AG04449 (cell line): ENCODE measurements at regions of chr17 and their contacts with region 1.

Region 1: GRCh38 chr17:38735161-38735997 is 5.2 kb downstream of the CISD3 start:
- DNase-seq: no peak
- H3K4me3 ChIP-seq: no peak overlapping the region
- CTCF ChIP-seq: peak; percentile 88

Region 2: GRCh38 chr17:38685491-38685890 is 49.9 kb before region 1 on chr17:
- CTCF ChIA-PET with region 1: interaction called, 11 read pairs
- POLR2A ChIA-PET with region 1: no interaction called
- DNase-seq: no peak
- H3K4me3 ChIP-seq: no peak overlapping the region
- CTCF ChIP-seq: no peak

Region 3: DNA sequence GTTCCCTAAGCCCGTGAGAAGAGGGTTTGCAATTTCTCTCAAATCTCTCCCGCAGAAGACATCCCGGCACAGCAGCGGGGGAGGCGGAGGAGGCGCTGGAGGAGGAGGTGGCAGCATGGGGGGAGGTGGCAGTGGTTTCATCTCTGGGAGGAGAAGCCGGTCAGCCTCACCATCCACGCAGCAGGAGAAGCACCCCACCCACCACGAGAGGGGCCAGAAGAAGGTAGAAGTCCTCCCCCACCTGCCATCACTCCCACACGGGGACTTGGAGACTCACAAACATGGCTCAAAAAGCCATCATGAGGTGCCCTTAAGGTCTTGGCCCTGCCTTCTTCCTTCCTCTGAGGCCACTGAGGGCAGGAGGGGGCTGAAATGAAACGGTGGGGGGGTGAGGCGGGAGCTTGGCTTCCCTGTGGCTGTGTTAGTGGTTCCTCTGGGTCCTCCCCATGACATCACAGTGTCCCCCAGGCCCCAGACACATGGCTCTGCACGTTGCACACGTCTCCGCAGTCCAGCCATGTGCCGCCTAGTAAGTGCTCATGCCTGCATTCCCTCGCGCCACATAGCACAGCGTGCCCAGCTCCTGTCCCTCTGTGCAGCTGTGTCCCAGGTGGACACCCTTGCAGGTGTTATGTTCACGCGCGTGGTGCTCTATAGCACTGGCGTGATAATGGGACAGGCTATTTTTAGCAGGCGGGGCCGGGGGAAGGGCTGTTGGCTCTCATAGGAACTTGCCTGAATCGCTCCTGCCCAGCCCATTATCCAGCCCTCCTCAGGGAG is 23.4 kb before region 1 on chr17:
- CTCF ChIA-PET with region 1: interaction called, 22 read pairs
- POLR2A ChIA-PET with region 1: interaction called, 4 read pairs
- DNase-seq: no peak
- H3K4me3 ChIP-seq: no peak overlapping the region
- CTCF ChIP-seq: no peak

Region 4: DNA sequence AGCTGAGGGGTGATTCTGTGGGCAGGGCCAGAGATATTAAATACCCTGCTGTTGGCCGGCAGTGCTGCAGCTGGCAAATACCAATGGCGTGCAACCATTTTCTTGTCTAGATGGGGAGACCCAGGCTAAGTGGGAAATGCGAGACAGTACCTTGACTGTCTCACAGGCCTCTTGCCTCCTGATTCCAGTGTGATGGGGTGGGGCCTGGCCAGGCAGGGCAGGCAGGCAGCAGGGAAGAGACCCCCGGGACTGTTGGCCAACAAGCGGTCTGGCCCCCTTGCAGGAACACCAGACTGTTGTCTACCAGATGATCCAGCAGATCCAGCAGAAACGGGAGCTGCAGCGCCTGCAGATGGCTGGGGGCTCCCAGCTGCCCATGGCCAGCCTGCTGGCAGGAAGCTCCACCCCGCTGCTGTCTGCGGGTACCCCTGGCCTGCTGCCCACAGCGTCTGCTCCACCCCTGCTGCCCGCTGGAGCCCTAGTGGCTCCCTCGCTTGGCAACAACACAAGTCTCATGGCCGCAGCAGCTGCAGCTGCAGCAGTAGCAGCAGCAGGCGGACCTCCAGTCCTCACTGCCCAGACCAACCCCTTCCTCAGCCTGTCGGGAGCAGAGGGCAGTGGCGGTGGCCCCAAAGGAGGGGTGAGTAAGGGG is 10.9 kb before region 1 on chr17:
- CTCF ChIA-PET with region 1: interaction called, 27 read pairs
- POLR2A ChIA-PET with region 1: interaction called, 3 read pairs
- DNase-seq: no peak
- H3K4me3 ChIP-seq: no peak overlapping the region
- CTCF ChIP-seq: no peak

Region 5: GRCh38 chr17:38777641-38778250 is 42.4 kb after region 1 on chr17:
- CTCF ChIA-PET with region 1: no interaction called
- POLR2A ChIA-PET with region 1: no interaction called
- DNase-seq: no peak
- H3K4me3 ChIP-seq: no peak overlapping the region
- CTCF ChIP-seq: no peak